Mammary epithelial cell (primary cell): ENCODE measurements at regions of chr1 and their contacts with region 1.

Region 1: DNA sequence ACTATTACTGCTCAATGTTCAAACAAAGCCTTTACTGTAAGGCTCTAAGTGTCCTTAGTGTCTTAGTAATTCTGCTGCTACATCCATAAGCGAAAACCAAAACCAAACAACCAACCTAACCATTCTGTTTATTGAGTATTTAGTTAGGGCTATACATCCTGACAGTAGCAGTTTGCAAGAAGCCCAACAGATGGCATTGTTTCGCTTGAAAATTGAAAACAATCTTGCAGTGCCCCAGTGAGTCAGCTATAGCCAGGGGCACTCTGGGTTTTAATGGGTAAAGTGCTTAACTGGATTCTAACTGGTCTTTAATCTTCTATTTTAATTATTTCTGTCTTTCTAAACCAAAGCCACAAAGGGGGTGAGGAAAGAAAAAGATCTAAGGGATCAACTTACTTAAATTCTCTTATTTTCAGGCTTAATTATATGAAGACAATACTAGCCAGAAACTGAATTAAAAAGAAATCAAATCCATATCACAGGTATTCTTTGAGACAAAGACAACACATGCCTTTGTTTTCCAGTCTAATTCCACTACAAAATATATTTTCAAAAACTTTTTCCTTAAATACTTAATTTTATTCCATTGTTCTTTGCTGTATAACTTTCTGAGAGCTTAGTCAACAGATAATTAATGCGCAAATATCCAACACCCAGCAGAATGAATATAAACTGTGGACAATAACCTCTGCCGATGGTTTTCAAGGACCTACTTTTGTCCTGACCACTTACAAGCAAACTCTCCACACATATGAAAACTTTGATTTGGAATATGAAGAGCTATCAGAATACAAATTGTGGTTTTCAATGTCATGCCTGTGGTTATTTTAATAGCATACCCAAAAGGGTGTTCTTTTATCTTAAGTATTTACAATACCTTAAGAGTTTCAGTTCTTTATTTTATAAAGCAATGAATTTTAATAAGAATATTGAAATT is 15.2 kb downstream of the POGZ start:
- DNase-seq: peak; percentile 77
- H3K4me3 ChIP-seq: no peak overlapping the region
- H3K27ac ChIP-seq: no peak overlapping the region
- H3K4me1 ChIP-seq: peaks cover 10% of the 10 kb centered on the region
- H3K27me3 ChIP-seq: no peaks in the 10 kb centered on the region
- CTCF ChIP-seq: peak; percentile 77 to 85

Region 2: GRCh38 chr1:151534665-151535278 is 90.7 kb after region 1 on chr1:
- CTCF ChIA-PET with region 1: no interaction called
- dilution Hi-C with region 1: no loop called
- in situ Hi-C with region 1: no loop called
- intact Hi-C with region 1: loop called (anchors 1 kb)
- DNase-seq: peak; percentile 57
- H3K4me3 ChIP-seq: no peak overlapping the region
- H3K27ac ChIP-seq: no peak overlapping the region
- H3K4me1 ChIP-seq: peaks cover 16% of the 10 kb centered on the region
- H3K27me3 ChIP-seq: no peaks in the 10 kb centered on the region
- CTCF ChIP-seq: peak; percentile 95 to 98

Region 3: GRCh38 chr1:151681921-151682320 is 237.8 kb after region 1 on chr1:
- CTCF ChIA-PET with region 1: no interaction called
- dilution Hi-C with region 1: no loop called
- in situ Hi-C with region 1: no loop called
- intact Hi-C with region 1: no loop called
- DNase-seq: no peak
- H3K4me3 ChIP-seq: no peak overlapping the region
- H3K27ac ChIP-seq: no peak overlapping the region
- H3K4me1 ChIP-seq: peaks cover 17% of the 10 kb centered on the region
- H3K27me3 ChIP-seq: no peaks in the 10 kb centered on the region
- CTCF ChIP-seq: no peak